MCF 10A (cell line): ENCODE measurements at regions of chr1 and their contacts with region 1.

Region 1: DNA sequence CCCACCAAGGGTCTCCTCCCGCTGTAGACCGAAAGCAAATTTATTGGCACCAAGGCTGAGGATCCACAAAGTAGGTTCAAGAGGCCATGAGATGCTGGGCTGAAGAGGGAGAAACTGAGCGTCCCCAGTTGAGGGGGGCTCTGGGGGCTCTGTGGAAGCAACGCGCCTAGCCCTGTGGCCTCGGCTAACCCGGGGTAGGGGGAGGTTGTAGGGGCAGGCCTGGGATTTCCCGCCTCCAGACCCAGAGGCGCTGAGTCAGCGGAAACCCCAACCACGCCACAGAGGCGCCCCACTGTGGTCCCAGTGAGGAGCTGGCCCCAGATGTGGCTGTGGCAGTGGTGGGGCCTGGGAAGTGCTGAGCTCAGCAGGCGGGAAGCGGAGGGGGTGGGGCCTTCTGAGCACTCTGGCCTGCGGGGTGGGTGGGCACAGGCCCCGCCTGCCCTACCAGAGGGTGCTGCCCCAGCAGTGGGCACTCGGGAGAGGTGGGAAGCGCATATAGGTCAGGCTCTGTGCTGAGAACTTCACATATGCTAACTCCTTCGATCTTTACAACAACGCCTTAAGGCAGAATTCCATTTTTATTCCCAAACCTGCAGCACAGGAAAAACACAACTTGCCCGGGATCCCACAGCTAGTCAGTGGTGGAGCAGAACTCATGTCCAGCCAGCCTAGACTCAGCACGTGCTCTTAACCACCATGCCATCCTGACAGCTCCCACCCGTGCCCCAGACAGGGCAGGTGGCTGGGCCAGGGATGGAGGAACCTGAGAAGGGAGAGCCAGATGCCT is 1.5 kb upstream of the COL16A1 start:
- DNase-seq: peak; percentile 66
- H3K4me3 Mint-ChIP-seq: no peak overlapping the region
- H3K27ac Mint-ChIP-seq: peak overlapping the region; percentile 55
- H3K4me1 Mint-ChIP-seq: peaks cover 75% of the 10 kb centered on the region
- H3K27me3 Mint-ChIP-seq: no peaks in the 10 kb centered on the region
- CTCF ChIP-seq: peak; percentile 25

Region 2: GRCh38 chr1:31095298-31095981 is 609.8 kb before region 1 on chr1:
- CTCF ChIA-PET with region 1: no interaction called
- POLR2A ChIA-PET with region 1: no interaction called
- intact Hi-C with region 1: no loop called
- DNase-seq: no peak
- H3K4me3 Mint-ChIP-seq: no peak overlapping the region
- H3K27ac Mint-ChIP-seq: no peak overlapping the region
- H3K4me1 Mint-ChIP-seq: no peaks in the 10 kb centered on the region
- H3K27me3 Mint-ChIP-seq: no peaks in the 10 kb centered on the region
- CTCF ChIP-seq: no peak

Region 3: GRCh38 chr1:31548907-31549808 is 156.1 kb before region 1 on chr1:
- CTCF ChIA-PET with region 1: no interaction called
- POLR2A ChIA-PET with region 1: no interaction called
- intact Hi-C with region 1: no loop called
- DNase-seq: peak; percentile 91
- H3K4me3 Mint-ChIP-seq: peak overlapping the region; percentile 73
- H3K27ac Mint-ChIP-seq: peak overlapping the region; percentile 33
- H3K4me1 Mint-ChIP-seq: peaks cover 11% of the 10 kb centered on the region
- H3K27me3 Mint-ChIP-seq: no peaks in the 10 kb centered on the region
- CTCF ChIP-seq: peak; percentile 71

Region 4: DNA sequence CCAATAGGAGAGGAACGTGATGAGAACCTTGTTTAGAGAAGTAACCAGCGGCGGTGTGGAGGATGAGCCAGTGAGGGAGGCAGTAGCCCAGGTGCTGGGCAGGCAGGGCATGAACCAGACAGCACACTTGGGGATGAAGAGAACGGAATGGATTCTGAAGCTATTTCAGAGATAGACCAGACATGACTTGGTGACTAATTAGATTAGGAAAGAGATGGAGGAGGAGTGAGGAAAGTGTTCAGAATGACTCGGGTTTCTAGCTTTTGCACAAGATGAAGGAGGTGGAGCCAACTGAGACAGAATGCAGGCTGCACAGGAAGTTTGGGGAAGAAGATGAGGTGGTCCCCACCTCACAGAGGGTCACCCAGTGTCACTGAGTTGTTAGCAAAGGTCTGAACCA is 65.7 kb before region 1 on chr1:
- CTCF ChIA-PET with region 1: no interaction called
- POLR2A ChIA-PET with region 1: interaction called, 12 read pairs
- intact Hi-C with region 1: loop called (anchors 1 kb)
- DNase-seq: peak; percentile 70
- H3K4me3 Mint-ChIP-seq: no peak overlapping the region
- H3K27ac Mint-ChIP-seq: no peak overlapping the region
- H3K4me1 Mint-ChIP-seq: peaks cover 19% of the 10 kb centered on the region
- H3K27me3 Mint-ChIP-seq: no peaks in the 10 kb centered on the region
- CTCF ChIP-seq: no peak

Region 5: GRCh38 chr1:31669786-31670592 is 35.3 kb before region 1 on chr1:
- CTCF ChIA-PET with region 1: interaction called, 9 read pairs
- POLR2A ChIA-PET with region 1: interaction called, 46 read pairs
- intact Hi-C with region 1: loop called (anchors 1 kb)
- DNase-seq: peak; percentile 97
- H3K4me3 Mint-ChIP-seq: peak overlapping the region; percentile 73
- H3K27ac Mint-ChIP-seq: peak overlapping the region; percentile 62
- H3K4me1 Mint-ChIP-seq: peaks cover 45% of the 10 kb centered on the region
- H3K27me3 Mint-ChIP-seq: no peaks in the 10 kb centered on the region
- CTCF ChIP-seq: no peak

Region 6: GRCh38 chr1:31715087-31715872 is 10.0 kb after region 1 on chr1:
- CTCF ChIA-PET with region 1: interaction called, 7 read pairs
- POLR2A ChIA-PET with region 1: interaction called, 32 read pairs
- intact Hi-C with region 1: no loop called
- DNase-seq: peak; percentile 61
- H3K4me3 Mint-ChIP-seq: no peak overlapping the region
- H3K27ac Mint-ChIP-seq: no peak overlapping the region
- H3K4me1 Mint-ChIP-seq: peaks cover 32% of the 10 kb centered on the region
- H3K27me3 Mint-ChIP-seq: peaks cover 13% of the 10 kb centered on the region
- CTCF ChIP-seq: peak; percentile 55

Region 7: GRCh38 chr1:31753707-31754349 is 48.6 kb after region 1 on chr1:
- CTCF ChIA-PET with region 1: no interaction called
- POLR2A ChIA-PET with region 1: interaction called, 17 read pairs
- intact Hi-C with region 1: no loop called
- DNase-seq: peak; percentile 80
- H3K4me3 Mint-ChIP-seq: peak overlapping the region; percentile 3
- H3K27ac Mint-ChIP-seq: peak overlapping the region; percentile 85
- H3K4me1 Mint-ChIP-seq: peaks cover 56% of the 10 kb centered on the region
- H3K27me3 Mint-ChIP-seq: no peaks in the 10 kb centered on the region
- CTCF ChIP-seq: no peak

Region 8: GRCh38 chr1:31891280-31891679 is 186.0 kb after region 1 on chr1:
- CTCF ChIA-PET with region 1: no interaction called
- POLR2A ChIA-PET with region 1: no interaction called
- intact Hi-C with region 1: no loop called
- DNase-seq: no peak
- H3K4me3 Mint-ChIP-seq: no peak overlapping the region
- H3K27ac Mint-ChIP-seq: no peak overlapping the region
- H3K4me1 Mint-ChIP-seq: peaks cover 8% of the 10 kb centered on the region
- H3K27me3 Mint-ChIP-seq: no peaks in the 10 kb centered on the region
- CTCF ChIP-seq: no peak